ENCODE measurements at regions of chr9 and their contacts with region 1.

Region 1: GRCh38 chr9:72022841-72023240 is 37.6 kb downstream of the C9orf57 start:
- DNase-seq: peak; percentile 88
- H3K4me3 ChIP-seq: no peak overlapping the region
- CTCF ChIP-seq: no peak

Region 2: GRCh38 chr9:71795097-71795813 is 227.6 kb before region 1 on chr9:
- CTCF ChIA-PET with region 1: interaction called, 10 read pairs
- POLR2A ChIA-PET with region 1: no interaction called
- DNase-seq: no peak
- H3K4me3 ChIP-seq: no peak overlapping the region
- CTCF ChIP-seq: no peak

Region 3: GRCh38 chr9:71812385-71812784 is 210.5 kb before region 1 on chr9:
- CTCF ChIA-PET with region 1: interaction called, 101 read pairs
- POLR2A ChIA-PET with region 1: no interaction called
- DNase-seq: no peak
- H3K4me3 ChIP-seq: no peak overlapping the region
- CTCF ChIP-seq: peak; percentile 6

Region 4: GRCh38 chr9:71819115-71819739 is 203.6 kb before region 1 on chr9:
- CTCF ChIA-PET with region 1: interaction called, 38 read pairs
- POLR2A ChIA-PET with region 1: no interaction called
- DNase-seq: no peak
- H3K4me3 ChIP-seq: no peak overlapping the region
- CTCF ChIP-seq: peak; percentile 37

Region 5: DNA sequence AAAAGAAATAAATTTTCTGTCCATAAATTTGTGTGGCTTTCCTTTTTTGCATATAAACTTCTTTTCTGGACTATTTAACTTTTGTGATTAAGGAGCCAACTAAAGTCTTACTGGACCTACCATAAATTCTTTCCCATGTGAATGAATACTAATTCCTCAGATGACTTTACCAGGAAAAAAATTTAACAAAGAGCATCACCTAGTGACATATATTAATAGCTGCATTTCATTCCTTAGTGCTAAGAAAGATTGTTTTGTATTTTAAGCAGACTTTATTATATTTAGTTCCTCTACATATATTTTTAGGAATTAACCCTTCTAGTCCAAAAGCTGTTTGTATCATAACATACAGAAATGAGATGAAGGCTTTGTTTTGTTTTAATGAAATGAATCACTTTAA is 47.0 kb before region 1 on chr9:
- CTCF ChIA-PET with region 1: interaction called, 10 read pairs
- POLR2A ChIA-PET with region 1: no interaction called
- DNase-seq: no peak
- H3K4me3 ChIP-seq: no peak overlapping the region
- CTCF ChIP-seq: peak; percentile 12

Region 6: DNA sequence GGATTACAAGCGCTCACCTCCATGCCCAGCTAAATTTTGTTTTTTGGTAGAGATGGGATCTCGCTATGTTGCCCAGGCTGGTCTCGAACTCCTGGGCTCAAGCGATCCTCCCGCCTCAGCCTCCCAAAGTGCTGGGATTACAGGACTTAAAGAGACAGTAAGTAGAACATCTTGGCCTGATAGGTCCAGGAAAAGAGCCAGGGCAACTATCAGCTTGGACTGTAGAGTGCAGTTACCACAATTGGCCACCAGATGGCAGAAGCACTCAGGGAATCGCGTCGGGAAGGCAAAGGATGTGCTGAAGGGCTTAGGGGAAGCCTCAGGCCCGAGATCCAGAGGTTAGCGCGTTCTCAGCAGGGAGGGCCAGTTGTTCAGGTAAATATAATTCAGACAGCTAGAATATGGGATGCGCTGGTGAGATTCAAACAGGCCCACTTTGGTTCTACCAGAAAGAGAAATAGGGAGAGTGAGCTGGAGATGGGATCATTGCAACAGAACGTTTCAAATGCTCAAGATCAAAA is 16.1 kb after region 1 on chr9:
- CTCF ChIA-PET with region 1: interaction called, 98 read pairs
- POLR2A ChIA-PET with region 1: interaction called, 3 read pairs
- DNase-seq: no peak
- H3K4me3 ChIP-seq: no peak overlapping the region
- CTCF ChIP-seq: peak; percentile 93

Measured in AG04449 (cell line).